K562 (cell line): ENCODE measurements at regions of chr20 and their contacts with region 1.

Region 1: DNA sequence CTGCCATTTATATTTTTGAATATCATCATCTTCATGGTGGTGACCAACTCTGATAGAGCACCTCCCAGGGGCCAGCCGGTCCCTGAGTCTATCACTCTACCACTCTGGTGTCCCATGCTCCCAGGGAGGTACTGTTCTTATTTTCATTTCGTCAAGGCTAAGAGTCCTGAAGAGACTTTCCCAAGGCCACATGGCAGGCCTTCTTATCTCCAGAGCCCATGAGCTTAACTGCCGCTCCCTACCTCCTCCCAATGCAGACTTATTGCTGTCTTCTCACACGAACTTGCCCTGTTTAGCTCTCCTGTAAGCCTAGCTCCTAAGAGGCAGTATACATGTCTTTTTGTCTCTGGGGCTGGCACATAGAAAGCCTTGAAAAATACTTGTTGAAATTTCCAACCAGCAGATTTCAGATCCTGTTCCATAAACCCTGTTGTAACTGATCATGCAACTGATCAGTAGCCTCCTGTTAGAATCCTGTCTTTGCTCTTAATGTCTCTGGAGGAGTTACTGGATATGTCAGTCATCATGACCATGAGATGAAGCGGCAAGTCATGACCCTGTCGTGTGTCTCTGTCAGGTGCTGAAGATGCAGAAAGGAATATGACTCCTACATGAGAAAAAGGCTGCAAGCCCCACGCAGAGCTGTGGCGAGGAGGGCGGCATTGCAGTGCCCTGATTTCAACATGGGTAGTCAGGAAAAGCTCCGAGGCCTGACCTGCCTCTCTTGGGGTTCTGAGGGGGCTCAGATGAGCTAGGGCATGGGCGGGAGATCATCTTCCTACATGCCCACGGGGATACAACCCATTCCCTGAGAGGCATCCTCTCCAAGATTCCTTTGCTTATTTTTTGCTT is 60.0 kb downstream of the TTI1 start:
- DNase-seq: peak; percentile 28 to 84 (median 56)
- ATAC-seq: peak; percentile 96
- H3K4me3 ChIP-seq: no peak overlapping the region
- H3K27ac ChIP-seq: peak overlapping the region; percentile 58
- H3K4me1 ChIP-seq: peaks cover 6 to 11% of the 10 kb centered on the region in 2 experiments; a peak in 3 of 5 replicates
- H3K27me3 ChIP-seq: no peaks in the 10 kb centered on the region
- CTCF ChIP-seq: no peak
- EP300 ChIP-seq: peak; percentile 57; the same call in 1 of the 2 replicates
- POLR2A ChIP-seq: no peak
- RAD21 ChIP-seq: peak in 1 of 2 experiments; percentile 17; a peak in 1 of 4 replicates

Region 2: GRCh38 chr20:37984018-37984785 is 10.9 kb after region 1 on chr20:
- CTCF ChIA-PET with region 1: no interaction called
- POLR2A ChIA-PET with region 1: interaction called, 11 read pairs
- in situ Hi-C with region 1: no loop called
- intact Hi-C with region 1: no loop called
- DNase-seq: no peak
- ATAC-seq: peak; percentile 38; the same call in 2 of the 3 replicates
- H3K4me3 ChIP-seq: no peak overlapping the region
- H3K27ac ChIP-seq: no peak overlapping the region
- H3K4me1 ChIP-seq: peaks cover 0 to 4% of the 10 kb centered on the region in 2 experiments; a peak in 2 of 5 replicates
- H3K27me3 ChIP-seq: no peaks in the 10 kb centered on the region
- CTCF ChIP-seq: no peak
- EP300 ChIP-seq: no peak
- POLR2A ChIP-seq: no peak
- RAD21 ChIP-seq: no peak

Region 3: DNA sequence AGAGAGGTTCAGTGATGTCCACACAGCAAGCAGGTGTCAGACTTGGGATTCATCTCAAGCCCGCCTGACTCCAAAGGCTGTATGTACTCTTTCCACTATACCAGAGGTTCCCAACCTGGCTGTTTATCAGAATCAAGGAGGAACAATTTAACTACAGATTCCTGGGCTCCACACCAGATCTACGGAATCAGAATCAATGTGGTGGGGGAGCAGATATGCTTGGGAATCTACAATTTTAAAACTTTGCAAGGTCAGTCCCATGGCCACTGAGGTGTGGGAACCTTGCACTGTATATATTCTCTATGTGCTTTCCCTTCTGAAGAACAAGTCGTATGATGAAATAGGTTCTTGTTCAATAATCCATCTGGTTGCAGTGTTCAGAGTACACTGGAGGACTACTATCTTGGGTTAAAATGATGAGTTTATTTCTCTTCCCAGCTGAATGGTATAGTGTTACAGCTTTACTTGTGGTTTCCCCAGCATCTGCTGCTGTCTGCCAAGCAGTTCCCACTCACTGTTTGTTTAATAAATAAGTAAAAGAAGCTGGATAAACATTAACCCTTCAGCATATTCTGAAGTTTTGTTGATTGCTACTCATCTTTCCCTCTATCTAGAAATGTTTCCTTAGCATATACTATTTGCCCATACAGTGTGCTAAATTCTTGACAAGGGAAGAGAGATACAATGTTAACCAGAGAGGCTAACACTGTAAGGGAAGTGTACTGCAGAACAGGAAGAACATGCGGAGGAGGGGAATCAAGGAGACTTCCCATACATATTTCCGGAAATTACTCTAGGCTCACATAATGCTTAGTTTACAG is 50.1 kb after region 1 on chr20:
- CTCF ChIA-PET with region 1: no interaction called
- POLR2A ChIA-PET with region 1: no interaction called
- in situ Hi-C with region 1: no loop called
- intact Hi-C with region 1: no loop called
- DNase-seq: no peak
- ATAC-seq: no peak
- H3K4me3 ChIP-seq: no peak overlapping the region
- H3K27ac ChIP-seq: no peak overlapping the region
- H3K4me1 ChIP-seq: no peaks in the 10 kb centered on the region; a peak in 1 of 5 replicates
- H3K27me3 ChIP-seq: no peaks in the 10 kb centered on the region
- CTCF ChIP-seq: no peak
- EP300 ChIP-seq: no peak
- POLR2A ChIP-seq: no peak
- RAD21 ChIP-seq: no peak

Region 4: GRCh38 chr20:38073307-38074071 is 100.2 kb after region 1 on chr20:
- CTCF ChIA-PET with region 1: no interaction called
- POLR2A ChIA-PET with region 1: no interaction called
- in situ Hi-C with region 1: no loop called
- intact Hi-C with region 1: no loop called
- DNase-seq: peak; percentile 60 to 76 (median 62)
- ATAC-seq: peak; percentile 93
- H3K4me3 ChIP-seq: no peak overlapping the region
- H3K27ac ChIP-seq: no peak overlapping the region
- H3K4me1 ChIP-seq: peaks cover 0 to 14% of the 10 kb centered on the region in 2 experiments; a peak in 2 of 5 replicates
- H3K27me3 ChIP-seq: no peaks in the 10 kb centered on the region
- CTCF ChIP-seq: peak; percentile 77 to 83 (median 83)
- EP300 ChIP-seq: no peak
- POLR2A ChIP-seq: no peak
- RAD21 ChIP-seq: peak; percentile 69 to 84